Body of pancreas (tissue), 4 donors: ENCODE measurements at regions of chr19 and their contacts with region 1.

Region 1: DNA sequence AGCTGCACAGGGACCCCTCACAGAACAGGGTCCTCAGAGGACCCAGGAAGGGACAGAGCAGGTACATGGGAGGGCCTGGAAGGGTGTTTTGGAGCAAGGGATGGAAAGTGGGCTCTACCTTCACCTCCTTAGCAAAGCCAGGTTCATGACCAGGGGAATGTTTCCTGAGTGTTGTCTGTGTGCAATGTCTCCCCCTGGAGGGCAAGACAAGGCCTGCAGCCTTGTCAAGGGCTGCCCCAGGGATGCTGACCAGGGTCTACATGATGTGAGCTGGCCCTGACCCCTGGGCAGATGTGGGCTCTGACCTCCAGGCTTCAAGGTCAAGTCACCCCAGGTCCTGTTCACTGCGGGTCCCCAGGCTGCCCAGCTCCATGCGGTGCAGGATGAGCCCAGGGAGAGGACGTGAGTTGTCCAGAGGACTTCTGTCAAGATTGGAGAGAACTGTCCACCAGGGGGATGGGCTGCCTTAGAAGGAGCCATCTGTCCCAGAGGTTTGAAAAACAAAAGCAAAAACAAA is 1.0 kb upstream of the CEACAM1 start:
- DNase-seq: peak; percentile 70 to 79 (median 74)
- ATAC-seq: peak; percentile 88
- H3K4me3 ChIP-seq: no peak overlapping the region
- H3K27ac ChIP-seq: peak overlapping the region in 1 of 4 donors; percentile 42
- H3K4me1 ChIP-seq: peaks cover 7% of the 10 kb centered on the region
- H3K27me3 ChIP-seq: no peaks in the 10 kb centered on the region
- CTCF ChIP-seq: peak; percentile 87 to 95 (median 94)
- POLR2A ChIP-seq: no peak

Region 2: DNA sequence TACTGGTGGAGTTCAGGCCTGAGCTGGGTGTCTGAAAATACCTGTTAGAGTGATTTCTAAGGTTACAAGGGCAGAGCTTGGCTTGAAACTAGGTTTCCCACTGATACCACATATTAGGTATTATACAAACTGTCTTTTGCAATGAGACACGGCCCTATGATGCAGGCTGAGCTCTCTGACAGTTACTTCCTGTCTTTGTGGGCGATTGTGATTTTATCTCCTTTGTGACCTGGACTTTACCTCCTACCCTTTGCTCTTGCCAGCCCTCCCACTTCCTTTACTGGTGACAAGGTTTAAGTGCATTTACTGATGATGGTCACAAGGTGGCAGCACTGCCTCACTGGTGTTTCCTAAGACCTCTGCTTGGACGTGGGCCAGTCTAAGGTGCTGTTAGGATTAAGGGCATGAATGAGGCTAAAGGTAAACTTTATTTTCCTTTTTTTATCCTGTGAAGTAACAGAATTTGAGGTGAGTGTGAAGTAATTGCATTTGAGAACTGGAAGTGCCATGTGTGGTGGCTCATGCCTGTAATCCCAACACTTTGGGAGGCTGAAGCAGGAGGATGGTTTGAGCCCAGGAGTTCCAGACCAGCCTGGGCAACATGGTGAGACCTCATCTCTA is 78.9 kb before region 1 on chr19:
- intact Hi-C with region 1: loop called (anchors 2 kb)
- DNase-seq: peak; percentile 91 to 97 (median 96)
- ATAC-seq: peak; percentile 96
- H3K4me3 ChIP-seq: no peak overlapping the region
- H3K27ac ChIP-seq: peak overlapping the region in 3 of 4 donors; percentile 19 to 73 (median 21)
- H3K4me1 ChIP-seq: peaks cover 10% of the 10 kb centered on the region
- H3K27me3 ChIP-seq: no peaks in the 10 kb centered on the region
- CTCF ChIP-seq: peak; percentile 76 to 98 (median 98)
- POLR2A ChIP-seq: no peak